ENCODE measurements at regions of chr2 and their contacts with region 1.

Region 1: DNA sequence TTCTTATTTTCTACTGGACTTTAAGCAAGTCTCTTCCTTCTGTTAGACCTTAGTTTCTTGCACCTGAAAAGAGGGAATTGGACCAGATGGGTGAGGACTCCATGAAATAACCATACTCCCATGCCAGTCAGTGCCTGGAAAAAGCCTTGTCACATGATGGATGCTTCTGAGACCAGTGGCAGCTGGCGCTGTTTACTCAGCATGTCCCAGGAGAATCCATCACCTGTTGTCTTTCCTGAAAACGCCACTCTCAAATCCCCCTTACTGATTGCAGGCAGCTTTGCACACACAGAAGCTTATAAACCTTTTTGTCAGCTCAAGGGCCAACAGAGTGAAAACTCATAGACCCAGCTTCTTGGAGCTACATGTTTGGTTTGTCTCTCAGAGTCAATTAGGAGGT is 117.6 kb downstream of the POLE4 start:
- DNase-seq: no peak
- H3K4me3 ChIP-seq: no peak overlapping the region
- H3K4me3 Mint-ChIP-seq: no peak overlapping the region
- H3K27ac ChIP-seq: no peak overlapping the region
- H3K27ac Mint-ChIP-seq: no peak overlapping the region
- H3K4me1 ChIP-seq: no peaks in the 10 kb centered on the region
- H3K4me1 Mint-ChIP-seq: no peaks in the 10 kb centered on the region
- H3K27me3 ChIP-seq: no peaks in the 10 kb centered on the region
- H3K27me3 Mint-ChIP-seq: peaks cover 0 to 2% of the 10 kb centered on the region in 2 donors

Region 2: GRCh38 chr2:75064691-75065396 is 11.2 kb before region 1 on chr2:
- CTCF ChIA-PET with region 1: interaction called, 22 read pairs
- POLR2A ChIA-PET with region 1: no interaction called
- DNase-seq: peak; percentile 1 to 51 (median 36)
- H3K4me3 ChIP-seq: no peak overlapping the region
- H3K4me3 Mint-ChIP-seq: no peak overlapping the region
- H3K27ac ChIP-seq: no peak overlapping the region
- H3K27ac Mint-ChIP-seq: no peak overlapping the region
- H3K4me1 ChIP-seq: no peaks in the 10 kb centered on the region
- H3K4me1 Mint-ChIP-seq: no peaks in the 10 kb centered on the region
- H3K27me3 ChIP-seq: no peaks in the 10 kb centered on the region
- H3K27me3 Mint-ChIP-seq: peaks cover 0 to 2% of the 10 kb centered on the region in 2 donors

Region 3: GRCh38 chr2:75100801-75101151 is 24.7 kb after region 1 on chr2:
- CTCF ChIA-PET with region 1: no interaction called
- POLR2A ChIA-PET with region 1: no interaction called
- DNase-seq: no peak
- H3K4me3 ChIP-seq: no peak overlapping the region
- H3K4me3 Mint-ChIP-seq: no peak overlapping the region
- H3K27ac ChIP-seq: no peak overlapping the region
- H3K27ac Mint-ChIP-seq: no peak overlapping the region
- H3K4me1 ChIP-seq: no peaks in the 10 kb centered on the region
- H3K4me1 Mint-ChIP-seq: no peaks in the 10 kb centered on the region
- H3K27me3 ChIP-seq: no peaks in the 10 kb centered on the region
- H3K27me3 Mint-ChIP-seq: peaks cover 6 to 7% of the 10 kb centered on the region in 2 donors

Measured in CD8-positive, alpha-beta memory T cell (primary cell).